Activated CD4-positive, alpha-beta memory T cell treated with anti-CD3 and anti-CD28 coated beads, Interleukin-2, amount 10 ng/mL, durations not matched to agents 7 days and 5 days (primary cell): ENCODE measurements at regions of chr1 and their contacts with region 1.

Region 1: DNA sequence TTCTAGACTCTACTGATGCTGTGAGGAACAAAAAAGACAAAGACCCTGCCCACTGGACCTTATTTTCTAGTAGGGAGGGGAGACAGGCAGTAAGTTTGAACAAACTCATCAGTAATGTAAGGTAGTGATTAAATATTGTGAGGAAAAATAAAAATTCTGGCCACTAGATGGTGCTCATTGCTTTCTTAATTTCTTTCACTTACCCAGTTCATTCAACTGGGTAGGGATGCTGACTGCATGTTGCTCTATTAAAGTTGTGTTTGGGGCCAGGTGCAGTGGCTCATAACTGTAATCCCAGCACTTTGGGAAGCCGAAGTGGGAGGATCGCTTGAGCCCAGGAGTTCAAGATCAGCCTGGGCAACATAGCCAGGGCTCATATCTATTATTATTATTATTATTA is 6.3 kb upstream of the KYAT3 start:
- DNase-seq: no peak
- H3K4me3 Mint-ChIP-seq: no peak overlapping the region
- H3K27ac Mint-ChIP-seq: no peak overlapping the region
- H3K4me1 Mint-ChIP-seq: peaks cover 26% of the 10 kb centered on the region
- H3K27me3 Mint-ChIP-seq: no peaks in the 10 kb centered on the region

Region 2: DNA sequence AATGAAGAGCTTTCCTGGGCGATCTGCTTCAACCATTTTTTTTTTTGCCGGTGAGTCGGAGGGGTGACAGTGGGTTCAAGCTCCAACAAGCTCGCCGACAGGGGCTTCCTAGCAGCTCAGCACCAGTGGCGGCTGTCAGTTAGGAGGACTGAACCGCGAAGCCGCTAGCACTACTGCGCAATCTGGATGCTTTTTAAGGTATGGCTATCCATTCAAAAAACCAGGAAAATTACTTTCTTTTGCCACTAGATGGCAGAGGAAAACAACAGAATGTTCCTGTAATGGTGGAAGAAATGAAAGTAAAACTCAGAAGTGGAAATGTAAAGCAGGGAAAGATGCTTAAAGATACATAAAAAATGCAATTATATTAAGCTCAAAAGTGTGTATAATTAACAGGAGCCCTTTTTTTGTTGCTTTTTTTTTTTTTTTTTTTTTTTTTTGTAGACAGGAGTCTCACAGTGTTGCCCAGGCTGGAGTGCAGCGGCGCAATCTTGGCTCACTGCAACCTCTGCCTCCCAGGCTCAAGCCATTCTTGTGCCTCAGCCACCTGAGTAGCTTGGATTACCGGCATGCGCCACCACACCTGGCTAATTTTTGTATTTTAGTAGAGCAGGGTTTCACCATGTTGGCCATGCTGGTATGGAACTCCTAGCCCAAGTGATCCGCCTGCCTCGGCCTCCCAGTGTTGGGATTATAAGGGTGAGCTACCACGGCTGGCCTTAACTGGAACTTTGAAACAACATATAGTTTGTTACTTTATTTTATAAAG is 14.7 kb before region 1 on chr1:
- CTCF ChIA-PET with region 1: interaction called, 13 read pairs
- POLR2A ChIA-PET with region 1: no interaction called
- DNase-seq: peak; percentile 32
- H3K4me3 Mint-ChIP-seq: peak overlapping the region; percentile 61
- H3K27ac Mint-ChIP-seq: peak overlapping the region; percentile 65
- H3K4me1 Mint-ChIP-seq: peaks cover 83% of the 10 kb centered on the region
- H3K27me3 Mint-ChIP-seq: no peaks in the 10 kb centered on the region

Region 3: GRCh38 chr1:89065079-89065868 is 66.6 kb after region 1 on chr1 and contains the start of gene GBP1:
- CTCF ChIA-PET with region 1: interaction called, 19 read pairs
- POLR2A ChIA-PET with region 1: interaction called, 3 read pairs
- DNase-seq: no peak
- H3K4me3 Mint-ChIP-seq: peak within 1 kb of the TSS; percentile 96
- H3K27ac Mint-ChIP-seq: peak within 1 kb of the TSS; percentile 88
- H3K4me1 Mint-ChIP-seq: peaks cover 59% of the 10 kb centered on the region
- H3K27me3 Mint-ChIP-seq: no peaks in the 10 kb centered on the region
- total RNA-seq, gene GBP1: 141 to 144 TPM

Region 4: GRCh38 chr1:89358287-89358893 is 359.7 kb after region 1 on chr1:
- CTCF ChIA-PET with region 1: interaction called, 11 read pairs
- POLR2A ChIA-PET with region 1: no interaction called
- DNase-seq: peak; percentile 86
- H3K4me3 Mint-ChIP-seq: peak overlapping the region; percentile 29
- H3K27ac Mint-ChIP-seq: no peak overlapping the region
- H3K4me1 Mint-ChIP-seq: peaks cover 47% of the 10 kb centered on the region
- H3K27me3 Mint-ChIP-seq: no peaks in the 10 kb centered on the region

Region 5: GRCh38 chr1:89454845-89455521 is 456.3 kb after region 1 on chr1:
- CTCF ChIA-PET with region 1: interaction called, 11 read pairs
- POLR2A ChIA-PET with region 1: no interaction called
- DNase-seq: peak; percentile 70
- H3K4me3 Mint-ChIP-seq: no peak overlapping the region
- H3K27ac Mint-ChIP-seq: no peak overlapping the region
- H3K4me1 Mint-ChIP-seq: peaks cover 10% of the 10 kb centered on the region
- H3K27me3 Mint-ChIP-seq: peaks cover 45% of the 10 kb centered on the region